Calu3 (cell line): ENCODE measurements at regions of chr12 and their contacts with region 1.

Region 1: GRCh38 chr12:4091016-4091743 is 182.4 kb upstream of the CCND2 start:
- DNase-seq: no peak
- H3K4me3 Mint-ChIP-seq: no peak overlapping the region
- H3K27ac Mint-ChIP-seq: no peak overlapping the region
- H3K4me1 Mint-ChIP-seq: no peaks in the 10 kb centered on the region
- H3K27me3 Mint-ChIP-seq: peaks cover 56% of the 10 kb centered on the region
- CTCF ChIP-seq: no peak

Region 2: DNA sequence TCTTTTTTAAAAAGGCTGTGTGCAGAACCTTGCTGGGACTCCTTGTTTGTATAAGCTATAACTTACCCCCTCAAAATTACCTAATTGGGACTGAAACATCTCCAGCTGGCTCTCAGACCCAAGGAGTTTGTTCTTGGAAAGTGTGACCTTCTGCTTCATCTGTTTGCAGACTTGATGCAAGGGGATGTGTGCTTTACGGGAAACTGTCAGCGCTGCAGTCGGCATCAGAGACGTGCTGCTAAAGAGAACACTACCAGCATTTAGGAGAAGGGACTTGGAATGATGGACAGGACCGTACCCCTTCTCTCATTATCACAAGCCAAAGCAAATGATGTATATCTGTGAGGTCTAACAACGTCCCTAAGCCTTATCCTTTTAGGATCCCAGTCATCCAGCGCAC is 43.8 kb before region 1 on chr12:
- CTCF ChIA-PET with region 1: interaction called, 12 read pairs
- intact Hi-C with region 1: no loop called
- DNase-seq: no peak
- H3K4me3 Mint-ChIP-seq: no peak overlapping the region
- H3K27ac Mint-ChIP-seq: no peak overlapping the region
- H3K4me1 Mint-ChIP-seq: no peaks in the 10 kb centered on the region
- H3K27me3 Mint-ChIP-seq: peaks cover 96% of the 10 kb centered on the region
- CTCF ChIP-seq: no peak

Region 3: DNA sequence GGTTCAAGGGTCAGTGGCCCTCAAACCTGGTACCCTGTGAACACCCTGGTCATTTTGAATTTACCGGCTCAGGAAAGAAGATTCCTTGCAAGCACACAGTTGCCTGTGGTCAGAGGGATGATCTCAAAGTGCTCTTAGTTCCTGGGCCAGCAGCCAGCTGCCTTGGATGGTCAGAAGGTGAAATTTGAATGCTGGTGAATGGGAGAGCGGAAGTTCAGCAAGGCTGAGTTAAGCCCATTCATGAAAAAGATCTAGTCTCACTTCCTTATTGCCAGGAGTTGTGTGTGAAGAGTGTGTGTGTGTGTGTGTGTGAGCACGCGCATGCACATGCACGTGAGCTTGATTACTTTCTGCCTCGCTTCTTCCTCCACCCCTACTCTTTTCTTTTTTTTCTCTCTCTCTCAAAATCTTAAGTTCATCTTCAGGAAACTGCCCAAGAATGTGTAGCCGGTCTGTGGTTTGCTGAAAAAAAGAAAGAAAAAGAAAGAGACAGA is 26.9 kb after region 1 on chr12:
- CTCF ChIA-PET with region 1: no interaction called
- intact Hi-C with region 1: no loop called
- DNase-seq: no peak
- H3K4me3 Mint-ChIP-seq: no peak overlapping the region
- H3K27ac Mint-ChIP-seq: no peak overlapping the region
- H3K4me1 Mint-ChIP-seq: no peaks in the 10 kb centered on the region
- H3K27me3 Mint-ChIP-seq: peaks cover 65% of the 10 kb centered on the region
- CTCF ChIP-seq: no peak